Dorsolateral prefrontal cortex (tissue), 120 donors: ENCODE measurements at regions of chr9 and their contacts with region 1.

Region 1: GRCh38 chr9:124771021-124771866 is at the start of gene NR6A1:
- DNase-seq: peak; percentile 92 to 97 (median 95)
- H3K4me3 ChIP-seq: peak within 1 kb of the TSS; percentile 64 to 99 (median 91)
- H3K27ac ChIP-seq: peak within 1 kb of the TSS in 44 of 59 donors; percentile 12 to 88 (median 60)
- H3K27me3 ChIP-seq: peaks cover 0 to 6% (median 0%) of the 10 kb centered on the region in 45 donors
- CTCF ChIP-seq: peak in 53 of 56 donors; percentile 10 to 71 (median 51)
- total RNA-seq, gene NR6A1: 2.5 to 7.4 (median 4.5) TPM

Region 2: GRCh38 chr9:124617471-124618141 is 153.6 kb before region 1 on chr9:
- intact Hi-C with region 1: no loop called
- DNase-seq: peak; percentile 66 to 89 (median 85)
- H3K4me3 ChIP-seq: no peak overlapping the region
- H3K27ac ChIP-seq: no peak overlapping the region
- H3K27me3 ChIP-seq: no peaks in the 10 kb centered on the region
- CTCF ChIP-seq: peak; percentile 54 to 98 (median 94)

Region 3: DNA sequence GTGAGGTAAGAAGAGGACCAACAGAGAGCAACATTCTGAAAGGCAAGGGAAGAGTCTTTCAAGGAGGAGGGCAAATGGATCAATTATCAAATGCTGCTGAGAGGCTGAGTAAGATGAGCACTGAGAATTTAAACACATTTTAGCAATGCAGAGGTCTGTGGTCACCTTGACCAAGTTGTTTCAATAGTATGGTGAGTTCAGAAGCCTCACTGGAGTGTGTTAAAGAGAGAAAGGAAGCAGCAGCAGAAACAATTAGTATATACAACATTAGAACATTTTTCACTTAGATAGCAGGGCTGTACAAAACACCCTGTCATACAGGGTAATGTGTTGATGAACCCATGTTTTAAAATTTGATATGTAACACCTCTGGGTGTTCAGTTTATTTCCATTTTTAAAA is 131.6 kb before region 1 on chr9:
- intact Hi-C with region 1: no loop called
- DNase-seq: no peak
- H3K4me3 ChIP-seq: no peak overlapping the region
- H3K27ac ChIP-seq: no peak overlapping the region
- H3K27me3 ChIP-seq: no peaks in the 10 kb centered on the region
- CTCF ChIP-seq: no peak

Region 4: DNA sequence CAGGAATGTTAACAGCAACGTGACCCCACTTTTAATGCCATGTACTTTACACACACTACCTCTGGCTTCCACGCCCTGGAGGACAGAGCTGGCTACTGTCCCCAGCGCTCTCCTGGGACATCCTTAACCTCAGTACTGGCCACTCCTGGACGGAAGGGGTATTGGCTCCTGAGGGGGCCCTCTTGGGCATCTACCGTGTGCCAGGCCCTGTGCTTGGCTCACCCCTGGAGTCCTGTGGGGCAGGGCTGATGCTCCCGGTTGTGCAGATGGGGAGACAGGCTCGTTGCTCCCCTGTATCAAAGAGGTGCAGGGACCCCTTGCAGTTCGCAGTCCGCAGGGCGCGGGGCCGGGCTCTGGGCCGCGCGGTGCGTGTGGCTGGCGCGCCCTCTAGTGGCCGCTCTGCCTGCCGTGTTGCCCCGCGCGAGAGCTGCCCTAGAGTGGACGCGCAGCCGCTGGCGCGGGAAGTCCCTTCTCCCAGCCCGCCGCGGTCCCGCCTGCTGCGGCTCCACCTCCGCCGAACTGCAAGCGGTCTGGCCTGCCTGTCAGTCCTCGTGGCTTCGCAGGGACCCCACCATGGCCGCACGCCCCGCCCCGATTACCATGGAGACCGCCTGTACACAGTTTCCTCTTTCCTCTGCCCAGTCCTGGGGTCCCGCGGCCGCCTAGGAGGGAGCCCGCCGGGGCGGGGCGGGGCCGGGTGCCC is 81.7 kb after region 1 on chr9 and contains the start of gene WDR38:
- intact Hi-C with region 1: loop called (anchors 1 kb)
- DNase-seq: peak in 7 of 10 donors; percentile 48 to 87 (median 60)
- H3K4me3 ChIP-seq: peak within 1 kb of the TSS; percentile 7 to 70 (median 53)
- H3K27ac ChIP-seq: peak within 1 kb of the TSS in 50 of 59 donors; percentile 8 to 83 (median 60)
- H3K27me3 ChIP-seq: no peaks in the 10 kb centered on the region
- CTCF ChIP-seq: peak; percentile 87 to 100 (median 98)
- total RNA-seq, gene WDR38: 0.36 to 1.2 (median 0.64) TPM in 21 of 120 experiments, not detected in the others

Region 5: DNA sequence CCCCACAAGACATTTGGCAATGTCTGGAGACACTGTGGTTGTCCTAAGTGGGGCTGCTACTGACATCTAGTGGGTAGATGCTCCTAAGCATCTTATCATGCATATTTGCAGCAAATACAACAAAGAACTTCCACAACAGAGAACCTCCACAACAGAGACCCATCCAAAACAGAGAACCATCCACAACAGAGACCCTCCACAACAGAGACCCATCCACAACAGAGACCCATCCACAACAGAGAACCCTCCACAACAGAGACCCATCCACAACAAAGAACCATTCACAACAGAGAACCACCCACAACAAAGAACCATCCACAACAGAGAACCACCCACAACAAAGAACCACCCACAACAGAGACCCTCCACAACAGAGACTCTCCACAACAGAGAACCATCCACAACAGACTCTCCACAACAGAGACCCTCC is 123.5 kb after region 1 on chr9:
- intact Hi-C with region 1: loop called in 1 of 2 experiments (anchors 2 kb)
- DNase-seq: peak in 1 of 10 donors; percentile 53
- H3K4me3 ChIP-seq: peak overlapping the region in 1 of 59 donors; percentile 6
- H3K27ac ChIP-seq: peak overlapping the region in 58 of 59 donors; percentile 1 to 90 (median 78)
- H3K27me3 ChIP-seq: no peaks in the 10 kb centered on the region
- CTCF ChIP-seq: peak in 55 of 56 donors; percentile 38 to 71 (median 55)

Region 6: GRCh38 chr9:124940693-124941453 is 169.6 kb after region 1 on chr9 and contains the start of gene GOLGA1:
- intact Hi-C with region 1: loop called in 1 of 2 experiments (anchors 5 kb)
- DNase-seq: peak; percentile 87 to 95 (median 92)
- H3K4me3 ChIP-seq: peak within 1 kb of the TSS; percentile 58 to 100 (median 95)
- H3K27ac ChIP-seq: peak within 1 kb of the TSS; percentile 63 to 99 (median 96)
- H3K27me3 ChIP-seq: no peaks in the 10 kb centered on the region
- CTCF ChIP-seq: peak in 27 of 56 donors; percentile 5 to 58 (median 28)
- total RNA-seq, gene GOLGA1: 16.5 to 38.0 (median 25.8) TPM

Region 7: DNA sequence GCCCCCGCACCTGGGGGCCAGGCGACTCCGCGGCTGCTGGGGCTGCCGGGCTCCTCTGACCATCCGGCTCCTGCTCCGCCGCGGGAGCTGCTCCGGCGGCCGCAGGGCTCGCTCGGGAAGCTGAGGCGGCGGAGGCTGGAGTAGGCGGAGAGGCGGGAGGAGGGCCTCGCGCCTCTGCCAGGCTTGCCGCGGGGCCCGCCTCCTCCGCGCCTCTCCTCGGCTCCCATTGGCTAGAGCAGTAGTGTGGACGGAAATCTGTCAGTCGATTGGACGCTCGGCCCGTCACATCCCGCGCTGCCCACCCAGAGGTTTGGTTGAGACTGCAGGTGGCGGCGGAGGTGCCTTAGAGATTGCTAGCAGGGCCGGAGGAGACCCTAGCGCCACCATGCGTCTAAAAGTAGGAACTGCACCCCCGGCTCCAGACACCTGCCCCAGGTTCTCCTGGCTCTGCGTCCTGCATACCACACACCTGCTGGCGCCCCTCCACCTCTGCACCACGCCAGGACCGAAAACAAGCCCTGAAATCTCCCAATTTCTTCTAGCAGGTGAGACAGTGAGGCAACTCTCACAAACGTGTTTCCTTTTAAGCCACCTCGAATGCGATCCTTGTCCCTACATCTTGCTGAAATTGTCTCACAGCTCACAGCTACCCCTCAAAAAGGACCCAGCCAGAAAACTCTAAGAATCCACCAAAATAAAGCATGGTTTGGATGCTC is 372.3 kb after region 1 on chr9 and contains the start of gene SCAI:
- intact Hi-C with region 1: loop called (anchors 2 to 5 kb)
- DNase-seq: peak; percentile 98 to 100 (median 99)
- H3K4me3 ChIP-seq: peak within 1 kb of the TSS; percentile 33 to 80 (median 68)
- H3K27ac ChIP-seq: peak within 1 kb of the TSS in 42 of 59 donors; percentile 8 to 84 (median 62)
- H3K27me3 ChIP-seq: no peaks in the 10 kb centered on the region
- CTCF ChIP-seq: peak; percentile 93 to 100 (median 99)
- total RNA-seq, gene SCAI: 19.8 to 73.6 (median 49.9) TPM

Region 8: GRCh38 chr9:125189361-125190289 is 418.4 kb after region 1 on chr9 and contains the start of gene PPP6C:
- intact Hi-C with region 1: loop called in 1 of 2 experiments (anchors 10 kb)
- DNase-seq: peak; percentile 96 to 99 (median 98)
- H3K4me3 ChIP-seq: peak within 1 kb of the TSS; percentile 63 to 100 (median 97)
- H3K27ac ChIP-seq: peak within 1 kb of the TSS; percentile 47 to 96 (median 87)
- H3K27me3 ChIP-seq: no peaks in the 10 kb centered on the region
- CTCF ChIP-seq: peak in 55 of 56 donors; percentile 45 to 89 (median 74)
- total RNA-seq, gene PPP6C: 30.0 to 59.2 (median 44.9) TPM

Region 9: DNA sequence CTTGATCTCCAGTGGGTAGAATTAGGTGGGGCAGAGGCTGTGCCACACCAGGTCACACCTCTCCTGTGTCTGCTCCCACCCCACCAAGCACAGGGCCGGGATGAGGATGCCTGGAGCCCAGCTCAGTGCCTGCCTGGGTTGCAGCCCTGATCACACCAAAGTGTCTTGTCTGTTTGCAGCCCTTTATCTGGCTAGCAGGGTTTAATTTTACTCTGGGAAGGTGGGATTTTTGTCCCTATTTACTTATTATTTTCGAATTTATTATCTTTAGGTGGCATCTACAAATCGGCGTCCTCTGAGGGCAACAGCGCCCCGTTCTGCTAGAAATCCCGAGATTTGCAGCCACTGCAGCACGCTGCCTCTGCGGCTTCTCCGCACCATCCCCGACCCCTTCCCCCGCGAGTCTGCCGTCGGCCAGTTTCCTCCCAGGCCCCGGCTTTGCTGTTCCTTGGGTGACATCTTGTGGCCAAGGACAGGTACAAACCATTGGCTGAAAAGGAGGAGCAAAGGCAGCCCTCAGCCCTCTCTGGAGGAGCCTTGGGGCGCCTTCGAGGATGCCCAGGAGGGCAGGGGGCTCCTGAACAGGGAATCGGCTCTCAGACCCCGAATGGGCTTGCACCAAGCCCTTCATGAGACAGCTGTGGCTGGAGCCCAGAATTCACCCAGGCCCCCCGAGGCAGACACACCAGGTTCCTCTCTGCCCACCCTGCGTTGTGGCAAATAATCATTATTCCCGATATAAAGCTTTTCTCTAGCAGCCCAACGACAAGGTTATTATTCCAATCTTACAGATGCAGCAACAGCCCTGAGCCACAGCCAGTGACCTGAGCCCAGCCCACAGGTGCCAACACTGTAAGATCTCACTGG is 603.4 kb after region 1 on chr9:
- intact Hi-C with region 1: loop called (anchors 2 to 5 kb)
- DNase-seq: peak; percentile 42 to 81 (median 70)
- H3K4me3 ChIP-seq: peak overlapping the region in 57 of 59 donors; percentile 15 to 68 (median 48)
- H3K27ac ChIP-seq: peak overlapping the region in 3 of 59 donors; percentile 22 to 44 (median 39)
- H3K27me3 ChIP-seq: no peaks in the 10 kb centered on the region
- CTCF ChIP-seq: peak; percentile 31 to 86 (median 74)

Region 10: DNA sequence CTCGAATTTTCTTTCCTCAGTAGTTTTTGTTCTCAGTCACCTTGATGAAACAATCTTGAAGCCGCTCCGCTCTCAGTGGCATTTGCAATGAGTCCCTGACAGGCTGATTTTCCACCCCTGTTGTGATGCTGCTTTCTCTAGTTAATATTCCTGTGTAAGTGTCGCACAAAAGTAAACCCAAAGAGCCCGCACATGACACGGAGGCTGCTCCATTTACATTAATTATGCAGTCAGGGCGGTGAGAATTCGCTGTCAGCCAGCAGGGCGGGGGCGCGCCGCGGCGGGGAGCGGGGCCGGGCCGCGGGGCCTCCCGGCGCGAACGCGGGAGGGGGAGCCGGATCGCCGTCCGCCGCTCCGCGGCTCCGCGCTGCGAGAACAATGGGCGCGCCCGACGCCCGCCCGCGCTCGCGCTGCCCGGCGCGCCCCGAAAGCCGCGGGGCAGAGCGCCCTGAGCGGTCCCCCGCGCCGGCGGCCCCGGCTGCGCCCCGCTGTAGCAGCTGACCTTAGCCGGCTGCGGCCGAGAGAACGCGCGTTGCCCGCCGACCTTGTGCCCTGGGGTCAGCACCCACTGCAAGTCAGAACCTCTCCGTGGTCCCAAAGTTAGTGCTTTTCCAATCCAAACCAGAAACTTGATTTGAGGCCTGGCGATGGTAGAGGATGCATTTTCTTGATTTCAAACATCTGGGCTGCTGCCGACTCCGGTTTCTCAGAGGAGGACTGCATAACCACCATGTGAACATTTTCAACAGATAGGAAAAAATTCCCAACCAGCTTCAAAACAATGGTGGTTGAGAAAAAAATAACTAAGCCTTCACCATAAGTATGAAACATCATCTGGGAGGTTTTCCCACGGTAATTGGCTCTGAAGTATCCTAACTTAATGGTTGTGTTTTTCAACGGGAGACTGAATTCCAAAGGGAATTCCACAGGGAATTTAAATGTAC is 1118.5 kb after region 1 on chr9:
- intact Hi-C with region 1: no loop called
- DNase-seq: peak; percentile 18 to 76 (median 55)
- H3K4me3 ChIP-seq: peak overlapping the region; percentile 40 to 77 (median 63)
- H3K27ac ChIP-seq: peak overlapping the region in 58 of 59 donors; percentile 10 to 89 (median 77)
- H3K27me3 ChIP-seq: no peaks in the 10 kb centered on the region
- CTCF ChIP-seq: peak in 4 of 56 donors; percentile 9 to 19 (median 16)